GM10248 (cell line): ENCODE measurements at regions of chr9 and their contacts with region 1.

Region 1: DNA sequence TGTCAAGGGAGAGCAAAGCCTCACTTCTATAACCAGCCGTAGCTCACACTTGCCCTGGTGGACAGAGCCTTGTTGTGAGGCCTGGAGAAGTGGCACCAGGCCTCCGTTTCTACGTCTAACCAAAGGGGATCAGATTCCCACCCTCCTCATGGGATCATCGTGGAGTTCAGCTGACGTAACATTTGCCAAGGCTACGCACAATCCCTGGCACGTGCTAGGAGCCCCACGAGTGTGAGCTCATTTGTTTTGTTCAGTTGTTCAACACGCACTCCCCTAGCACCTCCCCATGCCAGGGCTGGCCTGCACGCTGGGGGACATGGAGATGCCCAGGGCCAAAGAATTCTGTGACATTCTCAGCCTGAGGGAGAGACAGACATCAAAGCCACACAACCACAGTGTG is 23.1 kb downstream of the ADGRD2 start:
- DNase-seq: no peak
- CTCF ChIP-seq: no peak

Region 2: GRCh38 chr9:122562134-122562760 is 1911.1 kb before region 1 on chr9:
- CTCF ChIA-PET with region 1: no interaction called
- POLR2A ChIA-PET with region 1: interaction called, 10 read pairs
- DNase-seq: no peak
- CTCF ChIP-seq: no peak

Region 3: DNA sequence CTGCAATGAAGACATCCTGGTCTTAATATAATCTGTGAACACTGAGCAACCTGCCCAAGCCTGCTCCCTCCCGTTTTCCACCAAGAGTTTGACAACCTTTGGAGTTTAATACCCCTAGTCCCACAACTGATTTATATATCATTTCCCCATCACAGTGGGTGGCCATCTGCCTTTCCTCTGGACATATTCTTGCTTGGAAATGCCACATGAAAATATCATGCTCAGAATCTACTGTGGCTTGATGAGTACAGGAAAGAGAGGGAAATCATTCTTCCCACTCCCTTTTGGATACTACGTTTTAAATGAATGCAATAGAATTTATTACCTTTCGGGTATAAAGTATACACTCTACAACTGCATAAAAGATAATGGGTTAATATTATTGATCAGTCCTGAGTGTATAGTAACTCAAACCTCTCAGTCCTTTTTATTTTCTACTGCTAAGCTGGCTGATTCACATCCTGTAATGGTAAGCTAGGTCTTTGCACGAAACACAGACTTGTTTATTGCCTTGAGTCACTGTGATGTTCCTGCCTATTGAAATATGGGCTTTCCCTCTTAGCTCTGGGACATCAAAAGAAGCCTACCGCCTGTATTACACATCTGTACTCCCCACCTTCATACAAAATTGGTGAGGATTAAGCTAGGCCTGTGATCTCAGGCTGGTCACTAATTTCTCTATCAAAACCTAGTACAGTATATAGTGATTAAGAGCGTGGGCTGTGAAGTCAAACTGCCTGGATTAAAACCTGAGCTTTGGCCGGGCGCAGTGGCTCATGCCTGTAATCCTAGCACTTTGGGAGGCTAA is 101.4 kb after region 1 on chr9:
- CTCF ChIA-PET with region 1: no interaction called
- POLR2A ChIA-PET with region 1: no interaction called
- DNase-seq: no peak
- CTCF ChIP-seq: no peak

Region 4: DNA sequence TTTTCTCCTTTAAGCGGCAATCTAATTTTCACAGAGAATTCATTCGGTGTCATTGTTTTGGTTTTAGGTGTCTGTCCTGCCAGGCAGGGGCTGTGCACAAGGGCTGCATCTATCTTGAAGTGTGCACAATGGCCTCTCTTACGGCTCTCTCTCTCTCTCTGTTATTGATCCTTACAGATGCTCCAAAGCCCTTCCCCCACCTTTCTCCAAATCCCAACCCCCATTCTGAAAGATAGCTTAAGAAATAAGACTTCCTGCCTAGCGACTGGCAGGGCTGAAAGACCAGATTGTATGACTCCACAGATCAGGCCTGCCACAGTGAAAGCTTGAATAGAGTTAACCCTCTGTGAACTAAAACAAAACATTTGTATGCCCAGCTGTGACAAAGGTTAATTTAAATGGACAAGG is 120.3 kb after region 1 on chr9:
- CTCF ChIA-PET with region 1: no interaction called
- POLR2A ChIA-PET with region 1: no interaction called
- DNase-seq: no peak
- CTCF ChIP-seq: no peak